Activated CD4-positive, alpha-beta memory T cell treated with anti-CD3 and anti-CD28 coated beads for 36 hours (primary cell): ENCODE measurements at regions of chr5 and their contacts with region 1.

Region 1: DNA sequence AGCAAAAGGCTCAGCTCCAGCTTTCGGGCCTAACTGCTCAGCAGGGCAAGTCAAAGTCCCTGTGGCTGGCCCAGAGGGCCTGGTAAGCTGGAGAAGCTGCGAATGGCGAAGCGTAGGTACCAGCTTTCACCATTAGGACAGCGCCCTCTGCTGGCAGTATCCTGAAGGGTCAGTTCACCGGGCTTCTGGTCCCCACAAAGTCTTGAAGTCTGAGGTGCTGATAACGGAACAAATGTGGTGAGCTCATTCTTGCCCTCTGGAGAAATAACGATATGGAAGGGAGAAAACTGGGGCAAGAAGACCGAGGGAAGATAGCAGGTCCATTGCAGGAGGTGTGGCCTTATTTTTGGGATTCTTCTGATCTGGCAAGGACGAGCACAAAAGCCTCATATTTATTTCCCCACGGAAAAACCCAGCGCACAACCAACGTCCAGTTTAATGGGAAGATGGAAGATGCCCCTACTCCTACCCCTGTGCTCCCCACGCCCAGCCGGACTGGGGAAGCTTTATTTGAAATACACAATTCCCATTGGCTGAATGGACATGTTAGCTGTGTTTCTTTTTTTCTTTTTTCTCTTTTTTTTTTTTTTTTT is 7.2 kb downstream of the SOWAHA start:
- DNase-seq: peak; percentile 94
- H3K4me3 Mint-ChIP-seq: no peak overlapping the region
- H3K27ac Mint-ChIP-seq: no peak overlapping the region
- H3K4me1 Mint-ChIP-seq: peaks cover 10% of the 10 kb centered on the region
- H3K27me3 Mint-ChIP-seq: peaks cover 26% of the 10 kb centered on the region

Region 2: GRCh38 chr5:132386644-132387286 is 433.5 kb before region 1 on chr5:
- CTCF ChIA-PET with region 1: interaction called, 15 read pairs
- POLR2A ChIA-PET with region 1: no interaction called
- intact Hi-C with region 1: loop called (anchors 1 kb)
- DNase-seq: peak; percentile 87
- H3K4me3 Mint-ChIP-seq: no peak overlapping the region
- H3K27ac Mint-ChIP-seq: peak overlapping the region; percentile 14
- H3K4me1 Mint-ChIP-seq: peaks cover 42% of the 10 kb centered on the region
- H3K27me3 Mint-ChIP-seq: no peaks in the 10 kb centered on the region

Region 3: DNA sequence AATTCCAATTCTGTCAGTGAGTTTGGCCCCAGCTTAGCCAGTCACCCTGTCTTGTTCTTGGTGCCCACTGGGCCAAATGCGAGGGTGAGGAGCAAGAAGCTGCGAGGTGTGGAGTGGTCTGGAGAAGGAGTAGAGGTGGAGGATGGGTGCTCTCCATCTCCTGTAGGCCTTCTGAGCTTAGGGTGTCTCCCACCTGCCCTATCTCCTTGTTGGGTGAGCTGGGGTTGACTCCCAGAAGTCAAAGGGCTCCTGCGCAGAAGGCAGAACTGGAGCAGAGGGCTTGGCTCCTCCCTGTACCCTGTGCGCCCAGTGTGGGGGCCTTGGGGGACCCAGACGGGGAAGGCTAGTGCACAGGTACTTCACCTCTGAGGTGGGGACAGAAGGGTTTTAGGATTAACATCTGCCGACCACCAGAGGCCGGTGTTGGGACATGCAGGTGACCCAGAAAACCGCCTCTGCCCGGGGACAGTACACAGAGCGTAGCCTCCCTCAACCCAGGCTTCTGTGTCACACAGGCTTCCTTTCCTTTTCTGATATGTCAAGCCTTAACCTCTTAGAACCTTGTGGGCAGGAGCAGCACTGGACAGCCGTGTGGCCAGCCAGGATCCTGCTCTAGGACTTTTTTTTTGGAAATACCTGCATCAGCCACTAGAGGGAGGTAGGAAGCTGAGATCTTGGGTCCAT is 293.8 kb before region 1 on chr5:
- CTCF ChIA-PET with region 1: interaction called, 50 read pairs
- POLR2A ChIA-PET with region 1: no interaction called
- intact Hi-C with region 1: loop called (anchors 1 kb)
- DNase-seq: peak; percentile 48
- H3K4me3 Mint-ChIP-seq: no peak overlapping the region
- H3K27ac Mint-ChIP-seq: no peak overlapping the region
- H3K4me1 Mint-ChIP-seq: peaks cover 38% of the 10 kb centered on the region
- H3K27me3 Mint-ChIP-seq: peaks cover 2% of the 10 kb centered on the region

Region 4: GRCh38 chr5:132736853-132737833 is 83.1 kb before region 1 on chr5 and contains the start of gene KIF3A:
- CTCF ChIA-PET with region 1: interaction called, 13 read pairs
- POLR2A ChIA-PET with region 1: no interaction called
- intact Hi-C with region 1: no loop called
- DNase-seq: peak; percentile 99
- H3K4me3 Mint-ChIP-seq: peak within 1 kb of the TSS; percentile 84
- H3K27ac Mint-ChIP-seq: peak within 1 kb of the TSS; percentile 78
- H3K4me1 Mint-ChIP-seq: peaks cover 35% of the 10 kb centered on the region
- H3K27me3 Mint-ChIP-seq: peaks cover 2% of the 10 kb centered on the region
- total RNA-seq, gene KIF3A: 12.1 to 16.1 TPM

Region 5: GRCh38 chr5:132753135-132753987 is 66.9 kb before region 1 on chr5:
- CTCF ChIA-PET with region 1: interaction called, 22 read pairs
- POLR2A ChIA-PET with region 1: no interaction called
- intact Hi-C with region 1: no loop called
- DNase-seq: peak; percentile 47
- H3K4me3 Mint-ChIP-seq: no peak overlapping the region
- H3K27ac Mint-ChIP-seq: no peak overlapping the region
- H3K4me1 Mint-ChIP-seq: peaks cover 38% of the 10 kb centered on the region
- H3K27me3 Mint-ChIP-seq: no peaks in the 10 kb centered on the region

Region 6: DNA sequence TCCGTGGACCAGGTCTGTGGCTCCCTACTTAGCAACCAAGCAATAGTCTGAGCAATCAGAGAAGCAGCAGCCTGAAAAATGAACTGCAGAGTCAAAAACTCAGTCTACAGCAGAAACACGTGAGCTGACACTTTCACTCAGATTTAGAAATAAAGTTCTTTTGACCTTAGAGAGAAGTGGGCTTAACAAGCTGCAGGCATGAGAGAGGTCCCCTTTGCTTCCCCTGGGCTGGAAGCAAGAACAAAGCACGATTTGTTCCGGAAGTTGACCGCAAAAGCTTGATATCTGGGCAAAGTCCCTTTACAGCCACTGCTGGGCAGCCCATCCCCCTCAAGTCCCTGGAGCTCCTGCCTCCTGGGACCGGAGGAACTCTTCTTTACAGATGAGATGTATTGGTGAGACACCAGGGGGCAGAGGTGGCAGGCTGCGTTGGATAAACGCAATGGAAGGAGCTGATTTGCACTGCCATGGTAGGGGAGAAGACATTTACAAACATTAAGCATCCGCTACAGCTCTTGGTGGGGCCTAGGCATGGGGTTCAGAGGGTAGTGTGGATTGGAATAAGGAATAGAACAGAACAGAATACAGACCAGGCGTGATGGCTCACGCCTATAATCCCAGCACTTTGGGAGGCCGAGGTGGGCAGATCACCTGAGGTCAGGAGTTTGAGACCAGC is 13.0 kb before region 1 on chr5:
- CTCF ChIA-PET with region 1: interaction called, 44 read pairs
- POLR2A ChIA-PET with region 1: no interaction called
- intact Hi-C with region 1: no loop called
- DNase-seq: no peak
- H3K4me3 Mint-ChIP-seq: no peak overlapping the region
- H3K27ac Mint-ChIP-seq: no peak overlapping the region
- H3K4me1 Mint-ChIP-seq: peaks cover 2% of the 10 kb centered on the region
- H3K27me3 Mint-ChIP-seq: peaks cover 47% of the 10 kb centered on the region